Posterior vena cava (tissue), 2 donors: ENCODE measurements at regions of chr3 and their contacts with region 1.

Region 1: GRCh38 chr3:142839831-142840230 is 49.1 kb downstream of the PCOLCE2 start:
- DNase-seq: no peak

Region 2: GRCh38 chr3:142981108-142981507 is 141.3 kb after region 1 on chr3:
- intact Hi-C with region 1: loop called in 1 of 2 experiments (anchors 5 kb)
- DNase-seq: no peak